SK-N-SH (cell line): ENCODE measurements at regions of chr12 and their contacts with region 1.

Region 1: GRCh38 chr12:112992541-112993398 is 14.5 kb downstream of the OAS2 start:
- DNase-seq: peak; percentile 70
- H3K4me3 ChIP-seq: peak overlapping the region in 1 of 2 experiments; percentile 54; a peak in 1 of 4 replicates
- H3K27ac ChIP-seq: no peak overlapping the region
- H3K4me1 ChIP-seq: no peaks in the 10 kb centered on the region
- H3K27me3 ChIP-seq: no peaks in the 10 kb centered on the region
- CTCF ChIP-seq: peak; percentile 85
- EP300 ChIP-seq: no peak
- RAD21 ChIP-seq: peak; percentile 81

Region 2: GRCh38 chr12:112961074-112961473 is 31.7 kb before region 1 on chr12:
- CTCF ChIA-PET with region 1: interaction called, 13 read pairs
- POLR2A ChIA-PET with region 1: no interaction called
- DNase-seq: no peak
- H3K4me3 ChIP-seq: no peak overlapping the region
- H3K27ac ChIP-seq: no peak overlapping the region
- H3K4me1 ChIP-seq: no peaks in the 10 kb centered on the region
- H3K27me3 ChIP-seq: no peaks in the 10 kb centered on the region
- CTCF ChIP-seq: no peak
- EP300 ChIP-seq: no peak
- RAD21 ChIP-seq: no peak

Region 3: DNA sequence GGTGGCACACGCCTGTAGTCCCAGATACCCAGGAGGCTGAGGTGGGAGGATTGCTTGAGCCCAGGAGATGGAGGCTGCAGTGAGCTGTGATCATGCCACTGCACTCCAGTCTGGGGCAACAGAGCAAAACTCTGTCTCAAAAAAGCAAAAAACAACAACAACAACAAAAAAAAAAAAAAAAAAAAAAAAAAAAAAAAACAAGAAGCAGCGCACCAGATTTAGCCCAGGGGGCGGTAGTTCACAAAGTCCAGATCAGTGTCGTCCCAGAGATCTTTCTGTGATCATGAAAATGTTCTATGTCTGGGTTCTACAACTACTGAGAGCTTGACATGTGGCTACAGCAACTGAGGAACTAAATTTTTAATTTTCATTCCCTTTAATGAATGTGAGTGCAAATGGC is 13.0 kb after region 1 on chr12:
- CTCF ChIA-PET with region 1: interaction called, 14 read pairs
- POLR2A ChIA-PET with region 1: no interaction called
- DNase-seq: peak; percentile 40
- H3K4me3 ChIP-seq: no peak overlapping the region
- H3K27ac ChIP-seq: no peak overlapping the region
- H3K4me1 ChIP-seq: peaks cover 0 to 2% of the 10 kb centered on the region in 2 experiments; a peak in 1 of 4 replicates
- H3K27me3 ChIP-seq: no peaks in the 10 kb centered on the region
- CTCF ChIP-seq: peak; percentile 38; the same call in 1 of the 2 replicates
- EP300 ChIP-seq: no peak
- RAD21 ChIP-seq: peak; percentile 23; the same call in 1 of the 2 replicates

Region 4: DNA sequence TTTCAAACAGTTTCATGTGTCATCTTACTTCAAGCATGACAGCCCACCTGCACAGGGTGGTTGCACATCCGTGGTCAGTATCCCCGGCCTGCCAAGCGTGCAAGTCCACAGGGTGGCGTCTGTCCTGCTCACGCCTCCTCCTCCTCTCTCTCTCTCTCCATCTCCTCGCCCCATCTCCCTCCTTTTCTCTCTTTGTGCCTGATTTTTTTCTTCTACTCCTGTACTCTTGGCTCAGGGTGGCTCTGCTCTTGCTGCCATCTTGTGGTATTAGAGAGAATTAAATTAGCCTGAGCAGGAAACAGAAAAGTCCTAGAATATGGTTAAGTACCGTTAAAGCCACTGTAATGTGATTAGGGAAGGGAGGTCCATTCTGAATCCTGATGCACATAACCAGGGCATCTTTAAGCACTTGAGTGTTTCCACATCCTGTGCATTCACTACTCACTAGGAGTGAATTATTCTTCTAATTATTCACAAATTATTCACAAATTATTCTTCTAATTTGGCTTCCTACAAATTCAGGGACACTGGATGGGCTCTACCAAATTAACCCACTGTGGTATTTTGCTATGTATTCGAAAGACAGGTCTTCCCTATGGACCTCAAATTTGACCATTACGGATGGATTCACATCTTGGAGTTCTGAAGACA is 38.2 kb after region 1 on chr12:
- CTCF ChIA-PET with region 1: interaction called, 39 read pairs
- POLR2A ChIA-PET with region 1: no interaction called
- DNase-seq: peak; percentile 71
- H3K4me3 ChIP-seq: no peak overlapping the region; a peak in 1 of 4 replicates
- H3K27ac ChIP-seq: no peak overlapping the region
- H3K4me1 ChIP-seq: peaks cover 0 to 4% of the 10 kb centered on the region in 2 experiments; a peak in 1 of 4 replicates
- H3K27me3 ChIP-seq: no peaks in the 10 kb centered on the region; the same call in 1 of the 2 replicates
- CTCF ChIP-seq: peak; percentile 76
- EP300 ChIP-seq: no peak; a peak in 1 of 4 replicates
- RAD21 ChIP-seq: peak; percentile 85

Region 5: DNA sequence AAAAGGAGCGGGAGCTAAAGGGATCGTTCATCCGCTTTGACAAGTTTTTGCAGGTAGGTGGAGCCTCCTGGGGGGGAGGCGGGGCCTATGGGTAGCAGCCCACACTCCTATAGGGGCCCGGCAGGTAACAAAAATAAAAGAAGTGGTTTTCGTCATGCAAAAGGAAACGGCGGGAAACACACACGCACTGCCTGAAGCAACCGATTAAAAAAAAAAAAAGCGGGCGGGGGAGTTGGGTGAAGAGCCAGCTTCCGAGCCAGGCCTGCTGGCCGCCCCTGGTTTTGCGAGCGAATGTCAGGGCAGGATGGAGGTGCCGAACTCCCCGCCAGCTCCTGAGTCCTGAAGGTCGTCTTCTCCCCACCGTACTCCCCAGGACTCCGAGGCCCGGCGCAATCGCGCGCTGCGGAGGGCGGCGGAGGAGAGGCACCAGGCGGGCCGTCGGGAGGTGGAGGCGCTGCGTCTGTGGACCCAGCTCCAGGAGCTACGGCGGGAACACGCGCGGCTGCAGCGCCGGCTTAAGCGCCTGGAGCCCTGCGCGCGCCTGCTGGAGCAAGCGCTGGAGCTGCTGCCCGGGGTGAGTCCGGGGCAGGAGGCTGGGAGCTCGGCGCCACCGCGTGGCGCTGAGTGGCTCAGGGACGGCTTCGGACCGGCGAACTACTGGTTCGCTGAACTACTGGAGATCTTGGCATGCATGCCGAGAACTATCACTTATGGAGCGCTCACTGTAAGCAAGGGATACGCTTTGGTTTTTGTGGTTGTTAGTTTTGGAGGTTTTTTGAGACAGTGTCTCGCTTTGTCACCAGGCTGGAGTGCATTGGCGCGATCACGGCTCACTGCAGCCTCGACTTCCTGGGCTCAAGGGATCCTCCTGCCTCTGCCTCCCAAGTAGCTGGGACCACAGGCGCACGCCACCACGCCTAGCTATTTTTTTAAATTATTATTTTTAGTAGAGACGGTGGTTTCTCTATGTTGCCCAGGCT is 160.4 kb after region 1 on chr12:
- CTCF ChIA-PET with region 1: interaction called, 12 read pairs
- POLR2A ChIA-PET with region 1: no interaction called
- DNase-seq: peak; percentile 93
- H3K4me3 ChIP-seq: peak overlapping the region; percentile 34 to 56; a peak in 3 of 4 replicates
- H3K27ac ChIP-seq: no peak overlapping the region
- H3K4me1 ChIP-seq: peaks cover 5 to 11% of the 10 kb centered on the region in 2 experiments; a peak in 2 of 4 replicates
- H3K27me3 ChIP-seq: peaks cover 24% of the 10 kb centered on the region
- CTCF ChIP-seq: peak; percentile 53
- EP300 ChIP-seq: no peak
- RAD21 ChIP-seq: peak; percentile 69

Region 6: DNA sequence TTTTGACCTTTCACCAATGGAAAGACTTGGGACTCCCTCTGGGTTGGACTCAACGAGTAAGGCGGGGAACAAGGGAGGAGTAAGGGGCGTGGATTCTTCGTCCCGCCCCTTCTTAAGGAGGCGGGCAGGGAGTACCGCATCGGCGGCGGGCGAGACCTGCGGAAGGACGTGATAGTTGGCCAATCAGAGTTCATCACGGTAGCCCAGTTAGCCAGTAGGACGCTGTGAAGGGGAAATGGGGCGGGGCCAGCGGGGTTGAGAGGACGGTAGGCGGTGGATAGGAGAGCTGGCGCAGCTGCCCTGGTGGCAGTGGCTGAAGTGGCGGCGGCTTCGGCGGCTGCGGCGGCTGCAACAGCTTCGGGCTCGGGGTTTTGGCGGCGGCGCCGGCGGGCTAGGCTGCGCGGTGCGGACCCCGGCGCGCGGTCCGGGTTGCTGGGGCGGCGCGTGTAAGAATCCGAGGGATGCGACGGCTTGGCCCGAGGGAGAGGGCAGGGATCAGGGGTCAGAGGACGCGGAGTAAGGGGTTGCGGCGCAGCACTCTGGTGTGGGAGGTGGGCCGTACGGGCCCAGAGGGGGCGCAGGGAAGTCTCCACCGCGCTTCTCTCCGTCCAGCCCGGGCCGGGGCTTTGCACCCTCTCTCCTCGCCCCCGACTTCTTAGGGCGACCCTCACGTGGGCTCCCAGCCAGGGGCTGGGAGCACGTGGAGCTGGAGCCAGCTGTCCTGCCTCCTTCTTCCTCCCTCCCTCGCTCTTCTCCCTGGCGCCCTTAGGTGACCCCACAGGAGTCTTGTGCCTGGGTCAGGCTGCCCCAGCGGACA is 228.6 kb after region 1 on chr12 and contains the start of gene TPCN1:
- CTCF ChIA-PET with region 1: no interaction called
- POLR2A ChIA-PET with region 1: no interaction called
- DNase-seq: peak; percentile 97
- H3K4me3 ChIP-seq: peak within 1 kb of the TSS; percentile 69 to 82
- H3K27ac ChIP-seq: peak within 1 kb of the TSS; percentile 62 to 72
- H3K4me1 ChIP-seq: peaks cover 14 to 15% of the 10 kb centered on the region in 2 experiments; a peak in 3 of 4 replicates
- H3K27me3 ChIP-seq: no peaks in the 10 kb centered on the region
- CTCF ChIP-seq: peak; percentile 11
- EP300 ChIP-seq: no peak
- RAD21 ChIP-seq: no peak
- polyA plus RNA-seq, gene TPCN1: 10.3 and 15.7 TPM in 2 replicates